HepG2 (cell line): ENCODE measurements at regions of chr6 and their contacts with region 1.

Region 1: DNA sequence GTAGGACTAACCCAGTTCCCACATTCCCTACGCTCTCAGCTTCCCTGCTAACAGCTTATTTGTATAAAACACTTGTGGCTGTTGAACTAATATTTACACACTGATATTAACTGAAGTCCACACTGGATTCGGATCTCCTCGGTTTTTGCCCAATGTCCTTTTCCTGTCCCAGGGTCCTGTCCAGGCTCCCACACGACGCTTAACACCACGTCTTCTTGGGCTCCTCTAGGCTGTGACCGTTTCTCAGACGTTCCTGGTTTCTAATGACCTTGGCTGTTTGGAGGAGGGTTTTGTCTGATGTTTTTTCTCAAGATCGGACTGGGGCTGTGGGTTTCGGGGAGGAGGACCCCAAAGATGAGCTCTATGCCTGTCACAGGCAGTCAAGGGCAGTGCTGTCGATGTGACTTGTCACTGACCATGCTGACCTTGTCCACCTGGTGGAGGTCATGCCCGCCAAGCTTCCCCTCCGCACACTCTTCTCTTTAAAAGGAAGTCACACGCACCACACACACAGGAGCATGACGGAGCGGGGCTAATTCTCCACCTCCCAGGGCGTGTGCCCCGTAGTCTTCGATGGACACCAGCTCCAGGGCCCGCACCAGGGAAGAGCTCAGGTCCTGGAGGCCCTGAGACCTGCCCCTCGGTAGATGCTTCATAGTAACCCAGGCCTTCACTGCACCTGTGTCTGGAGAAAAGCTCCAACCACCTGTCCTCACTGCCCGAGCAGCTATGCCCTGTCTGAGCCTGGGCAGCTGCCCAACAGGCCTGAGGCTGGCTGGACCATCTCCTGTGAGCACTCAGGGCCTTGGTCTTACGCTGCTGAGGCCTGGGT is 72.0 kb downstream of the TTLL2 start:
- DNase-seq: peak; percentile 81
- ATAC-seq: peak; percentile 47
- H3K4me3 ChIP-seq: peak overlapping the region in 2 of 3 experiments; percentile 11 to 61; a peak in 3 of 6 replicates
- H3K27ac ChIP-seq: peak overlapping the region; percentile 75
- H3K4me1 ChIP-seq: peaks cover 72% of the 10 kb centered on the region
- H3K27me3 ChIP-seq: peaks cover 1 to 24% of the 10 kb centered on the region in 2 experiments
- CTCF ChIP-seq: 0 out of 2 replicates have a peak, but pooled peaks have one; percentile 18
- EP300 ChIP-seq: peak in 1 of 2 experiments; percentile 75; a peak in 2 of 4 replicates
- POLR2A ChIP-seq: no peak
- RAD21 ChIP-seq: no peak

Region 2: DNA sequence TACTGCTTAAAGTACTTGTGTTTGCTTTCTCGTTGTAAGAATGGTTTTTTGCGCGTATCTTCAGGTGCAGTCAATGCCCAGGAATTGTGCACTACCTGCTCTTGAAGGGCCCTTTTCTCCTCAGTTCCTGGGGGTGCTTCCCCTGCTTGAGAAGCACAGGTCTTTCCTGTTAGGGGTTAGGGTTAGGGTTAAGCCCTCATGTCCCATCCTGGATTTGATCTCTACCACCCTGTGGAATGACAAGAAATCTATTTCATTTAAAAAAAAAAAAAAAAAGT is 1189.7 kb before region 1 on chr6:
- CTCF ChIA-PET with region 1: no interaction called
- POLR2A ChIA-PET with region 1: no interaction called
- in situ Hi-C with region 1: no loop called
- intact Hi-C with region 1: no loop called
- DNase-seq: no peak
- ATAC-seq: no peak
- H3K4me3 ChIP-seq: no peak overlapping the region
- H3K27ac ChIP-seq: no peak overlapping the region
- H3K4me1 ChIP-seq: no peaks in the 10 kb centered on the region
- H3K27me3 ChIP-seq: peaks cover 2 to 58% of the 10 kb centered on the region in 2 experiments
- CTCF ChIP-seq: no peak
- EP300 ChIP-seq: no peak
- POLR2A ChIP-seq: no peak
- RAD21 ChIP-seq: no peak

Region 3: GRCh38 chr6:167420858-167421766 is 24.2 kb after region 1 on chr6:
- CTCF ChIA-PET with region 1: no interaction called
- POLR2A ChIA-PET with region 1: interaction called, 13 read pairs
- in situ Hi-C with region 1: no loop called
- intact Hi-C with region 1: loop called (anchors 2 kb)
- DNase-seq: peak; percentile 84
- ATAC-seq: peak; percentile 89
- H3K4me3 ChIP-seq: peak overlapping the region in 1 of 3 experiments; percentile 26; a peak in 2 of 6 replicates
- H3K27ac ChIP-seq: peak overlapping the region; percentile 66
- H3K4me1 ChIP-seq: peaks cover 57% of the 10 kb centered on the region
- H3K27me3 ChIP-seq: 0 out of 5 replicates have a peak, but pooled peaks cover 0 to 4% of the 10 kb centered on the region in 2 experiments
- CTCF ChIP-seq: peak; percentile 20; the same call in 1 of the 2 replicates
- EP300 ChIP-seq: peak in 1 of 2 experiments; percentile 59; a peak in 1 of 4 replicates
- POLR2A ChIP-seq: peak; percentile 50 to 77
- RAD21 ChIP-seq: peak; percentile 79; the same call in 1 of the 2 replicates